Ascending aorta (tissue), 2 donors: ENCODE measurements at regions of chr17 and their contacts with region 1.

Region 1: DNA sequence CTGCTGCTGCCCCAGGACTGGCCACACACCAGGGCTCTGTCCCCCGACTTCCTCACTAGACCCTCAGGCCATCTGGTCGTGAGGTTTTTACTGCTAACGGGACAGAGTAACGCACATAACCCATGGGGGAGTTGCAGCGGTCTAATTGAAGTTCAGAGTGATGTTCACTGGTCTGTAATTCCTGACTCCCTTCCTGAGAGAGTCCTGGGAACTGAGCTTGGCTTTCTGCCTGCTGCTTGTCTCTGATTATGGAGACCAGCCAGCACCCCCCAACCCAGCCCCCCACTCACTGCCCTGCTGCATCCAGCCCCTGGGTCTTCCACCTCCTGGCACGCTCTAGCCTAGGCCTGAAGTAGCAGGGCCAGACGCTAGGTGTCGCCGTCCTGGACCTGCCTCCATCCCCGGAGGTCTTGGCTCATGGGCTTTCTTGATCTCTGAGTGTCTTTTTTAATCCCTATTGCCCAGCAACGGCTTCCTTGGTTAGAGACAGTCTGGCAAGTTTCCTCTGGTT is 192.9 kb downstream of the CCDC182 start:
- DNase-seq: peak in 1 of 2 donors; percentile 73
- H3K4me3 ChIP-seq: no peak overlapping the region
- H3K27ac ChIP-seq: no peak overlapping the region
- H3K4me1 ChIP-seq: peaks cover 0 to 23% of the 10 kb centered on the region in 2 donors
- H3K27me3 ChIP-seq: no peaks in the 10 kb centered on the region
- CTCF ChIP-seq: peak; percentile 28 to 68 (median 56)

Region 2: DNA sequence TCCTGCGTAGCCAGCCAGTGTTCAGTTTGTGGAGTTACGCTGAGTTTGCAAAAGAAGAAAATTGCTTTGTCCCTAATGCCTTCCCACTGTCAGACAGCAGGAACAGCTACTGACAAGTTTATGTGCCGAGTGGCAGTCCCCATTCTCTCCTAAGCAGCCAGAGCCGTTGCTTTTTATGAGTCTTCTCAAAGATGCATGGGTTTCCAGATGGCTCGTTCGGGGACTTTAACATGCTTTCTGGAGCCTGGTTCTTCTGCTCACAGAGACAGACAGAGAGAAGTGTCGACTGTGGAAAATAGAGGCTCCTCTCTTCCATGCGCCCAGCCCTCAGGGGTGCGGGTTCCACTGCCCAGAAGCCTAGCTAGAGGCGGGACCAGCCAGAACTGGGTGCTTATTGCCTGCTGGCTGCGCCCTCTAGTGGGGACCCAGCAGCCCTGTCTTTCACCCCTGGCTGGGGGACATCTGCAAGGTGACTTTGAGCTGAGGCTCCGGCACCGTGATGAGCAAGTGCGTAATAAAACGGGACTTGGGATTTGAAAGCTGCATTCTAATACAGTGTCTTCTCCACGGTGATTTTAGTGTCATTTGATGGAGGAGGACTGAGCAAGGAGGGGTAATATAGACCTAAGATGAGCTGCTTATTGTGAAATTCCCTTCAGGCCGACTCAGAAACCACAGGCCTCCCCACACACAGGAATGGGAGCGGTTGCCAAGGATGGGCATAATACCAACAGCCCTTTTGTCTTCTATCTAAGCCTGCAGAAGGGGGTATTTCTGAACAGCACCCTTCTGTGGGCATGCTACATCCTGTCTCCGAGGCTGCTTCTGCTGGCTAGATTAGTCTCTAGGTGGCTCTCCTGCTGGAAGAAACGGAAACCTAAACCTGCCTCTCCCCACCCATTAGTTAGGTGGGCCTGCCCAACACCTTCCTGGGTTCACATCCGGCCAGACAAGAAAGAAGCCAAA is 119.8 kb after region 1 on chr17:
- intact Hi-C with region 1: loop called (anchors 5 kb)
- DNase-seq: peak in 1 of 2 donors; percentile 80
- H3K4me3 ChIP-seq: no peak overlapping the region
- H3K27ac ChIP-seq: no peak overlapping the region
- H3K4me1 ChIP-seq: peaks cover 0 to 4% of the 10 kb centered on the region in 2 donors
- H3K27me3 ChIP-seq: no peaks in the 10 kb centered on the region
- CTCF ChIP-seq: peak; percentile 86 to 96 (median 95)